Upper lobe of right lung (tissue), 1 donor: ENCODE measurements at regions of chr6 and their contacts with region 1.

Region 1: DNA sequence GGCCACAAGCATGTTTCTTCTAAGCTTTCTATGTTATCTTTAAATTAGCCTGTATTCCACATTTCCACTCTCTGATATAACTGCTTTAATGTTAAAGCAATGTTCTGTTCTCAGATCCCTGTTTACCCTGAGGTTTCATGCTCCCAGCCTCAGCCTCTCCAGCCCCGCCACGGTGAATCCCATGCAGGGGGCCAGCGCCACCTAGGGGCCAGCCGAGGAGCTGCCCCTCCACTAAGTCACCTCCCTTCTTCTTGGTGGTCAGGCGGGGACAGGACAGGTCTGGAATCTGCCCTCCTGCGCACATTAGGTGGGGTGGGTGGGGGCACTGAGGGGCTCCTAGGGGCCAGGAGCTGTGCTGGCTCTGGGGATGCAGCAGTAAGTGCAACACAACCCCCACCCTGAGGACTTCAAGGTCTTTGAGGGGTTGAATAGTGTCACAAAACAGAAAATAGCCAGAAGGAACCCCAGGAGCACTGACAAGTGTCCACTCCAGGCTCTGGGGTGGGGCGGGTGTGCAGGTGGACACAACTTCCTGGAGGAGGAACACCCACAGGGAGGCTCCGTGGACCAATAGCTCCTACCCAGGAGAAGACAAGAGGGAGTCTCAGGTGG is 61.6 kb downstream of the RAB44 start:
- DNase-seq: peak; percentile 90
- ATAC-seq: peak; percentile 95
- H3K4me3 ChIP-seq: no peak overlapping the region
- H3K27ac ChIP-seq: no peak overlapping the region
- H3K4me1 ChIP-seq: peaks cover 12% of the 10 kb centered on the region
- H3K27me3 ChIP-seq: no peaks in the 10 kb centered on the region
- CTCF ChIP-seq: peak; percentile 94

Region 2: DNA sequence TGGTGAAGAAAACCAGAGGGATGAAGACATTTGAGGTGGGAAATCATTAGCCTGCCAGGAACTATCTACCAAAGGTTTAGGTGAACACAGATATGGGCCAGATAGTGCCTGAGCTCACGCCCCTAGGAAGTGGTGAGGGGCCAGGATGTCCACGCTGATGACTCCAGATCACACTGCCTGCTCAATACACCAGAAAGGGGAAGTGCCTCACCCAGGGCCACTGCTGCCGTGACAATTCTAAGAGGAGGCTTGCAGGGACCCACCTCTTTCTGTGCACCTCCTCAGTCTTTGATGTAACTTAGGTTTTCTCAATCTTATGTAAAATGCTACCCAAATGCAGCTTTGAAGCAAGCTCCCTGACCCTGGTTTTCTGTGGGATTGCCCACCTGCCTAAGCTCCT is 67.0 kb before region 1 on chr6:
- intact Hi-C with region 1: loop called (anchors 5 kb)
- DNase-seq: peak; percentile 61
- ATAC-seq: peak; percentile 80
- H3K4me3 ChIP-seq: no peak overlapping the region
- H3K27ac ChIP-seq: no peak overlapping the region
- H3K4me1 ChIP-seq: peaks cover 8% of the 10 kb centered on the region
- H3K27me3 ChIP-seq: no peaks in the 10 kb centered on the region
- CTCF ChIP-seq: no peak